OCI-LY7 (cell line): ENCODE measurements at regions of chr18 and their contacts with region 1.

Region 1: DNA sequence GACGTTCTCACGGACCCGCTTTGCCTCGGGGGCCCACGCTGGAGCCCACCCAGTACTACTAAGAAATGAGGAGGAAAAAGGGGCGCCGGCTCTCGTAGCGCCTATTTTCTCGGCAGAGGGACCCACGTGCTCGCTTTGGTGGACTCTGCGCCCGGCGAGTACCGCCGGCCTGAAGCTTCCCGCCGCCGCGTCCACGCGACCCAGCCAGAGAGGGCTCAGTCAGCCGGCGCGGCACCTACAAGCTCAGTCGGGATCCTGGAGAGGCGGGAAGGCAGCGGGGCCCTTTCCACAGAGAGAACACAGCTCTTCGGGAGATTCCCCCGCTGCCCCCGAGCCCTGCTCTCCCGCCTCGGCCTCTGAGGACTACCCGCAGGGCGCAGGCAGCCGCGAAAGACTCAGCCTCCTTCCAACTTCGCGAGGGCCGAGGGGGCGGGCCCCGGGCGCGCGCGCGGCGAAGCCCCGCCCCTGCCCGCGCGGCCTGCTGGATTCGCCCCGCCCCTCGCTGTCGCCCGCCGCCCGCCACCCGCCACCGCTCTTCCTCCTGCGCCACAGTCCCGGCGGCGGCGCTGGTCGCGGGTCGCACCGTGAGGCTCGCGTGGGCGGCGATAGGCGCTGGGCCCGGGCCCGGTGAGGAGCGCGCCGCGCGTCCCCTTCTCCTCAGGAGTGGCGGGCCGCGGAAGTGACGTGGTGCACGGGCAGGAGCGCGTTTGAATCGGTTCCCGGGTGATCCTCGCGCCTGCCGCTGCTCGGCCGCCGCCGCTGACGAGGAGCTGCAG is at the start of gene SMCHD1:
- DNase-seq: peak; percentile 87
- H3K4me3 ChIP-seq: peak within 1 kb of the TSS; percentile 97
- H3K27ac ChIP-seq: peak within 1 kb of the TSS; percentile 88
- H3K4me1 ChIP-seq: peaks cover 35% of the 10 kb centered on the region
- CTCF ChIP-seq: no peak
- total RNA-seq, gene SMCHD1: 140 and 164 TPM in 2 replicates

Region 2: GRCh38 chr18:2392446-2392845 is 262.9 kb before region 1 on chr18:
- CTCF ChIA-PET with region 1: no interaction called
- POLR2A ChIA-PET with region 1: no interaction called
- intact Hi-C with region 1: no loop called
- DNase-seq: no peak
- H3K4me3 ChIP-seq: no peak overlapping the region
- H3K27ac ChIP-seq: no peak overlapping the region
- H3K4me1 ChIP-seq: no peaks in the 10 kb centered on the region
- CTCF ChIP-seq: no peak

Region 3: DNA sequence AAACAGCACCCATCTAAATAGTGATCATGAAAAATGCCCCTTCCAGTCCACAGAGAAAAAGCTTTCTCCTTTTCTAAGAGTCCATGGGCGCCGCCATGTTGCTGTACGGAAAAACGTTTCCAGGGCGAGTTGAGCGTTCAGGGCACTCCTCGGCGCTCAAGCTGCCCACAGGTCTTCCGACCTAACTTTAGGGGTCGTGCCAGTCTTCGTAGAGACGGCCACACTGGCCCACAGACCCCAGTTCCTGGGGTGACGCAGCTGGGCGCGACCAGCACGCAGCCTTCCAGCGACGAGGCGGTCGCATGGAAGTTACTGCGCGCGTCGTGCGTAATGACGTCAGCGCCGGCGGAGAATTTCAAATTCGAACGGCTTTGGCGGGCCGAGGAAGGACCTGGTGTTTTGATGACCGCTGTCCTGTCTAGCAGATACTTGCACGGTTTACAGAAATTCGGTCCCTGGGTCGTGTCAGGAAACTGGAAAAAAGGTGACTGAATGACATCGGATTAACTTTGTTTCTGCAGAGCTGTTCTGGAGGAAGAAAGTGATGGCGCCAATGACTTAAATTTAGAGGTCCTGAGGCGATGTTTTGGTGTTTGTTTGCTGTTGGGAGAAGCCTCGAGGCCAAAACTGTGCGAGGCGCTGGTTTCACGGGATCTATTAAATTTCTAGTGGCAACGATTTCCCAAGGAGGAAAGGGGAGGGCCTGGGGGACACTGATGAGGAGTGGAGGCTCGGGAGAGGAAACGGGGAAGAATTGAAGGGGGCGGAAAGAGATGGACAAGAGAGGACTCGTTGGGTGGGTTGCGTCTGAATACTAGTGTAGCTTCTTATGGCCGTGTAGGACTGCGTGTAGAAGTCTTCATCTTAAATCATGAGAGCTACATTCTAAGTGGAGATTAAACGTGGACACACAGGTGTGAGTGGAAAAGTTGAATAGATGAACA is 83.9 kb before region 1 on chr18 and contains the starts of genes METTL4 and NDC80:
- CTCF ChIA-PET with region 1: interaction called, 4 read pairs
- POLR2A ChIA-PET with region 1: interaction called, 9 read pairs
- intact Hi-C with region 1: loop called (anchors 1 kb)
- DNase-seq: peak; percentile 94
- H3K4me3 ChIP-seq: peak within 1 kb of the TSS; percentile 84
- H3K27ac ChIP-seq: peak within 1 kb of the TSS; percentile 78
- H3K4me1 ChIP-seq: peaks cover 19% of the 10 kb centered on the region
- CTCF ChIP-seq: no peak
- total RNA-seq, gene METTL4: 11.8 and 12.4 TPM in 2 replicates
- total RNA-seq, gene NDC80: 73.0 and 91.1 TPM in 2 replicates

Region 4: GRCh38 chr18:2636126-2636631 is 19.2 kb before region 1 on chr18:
- CTCF ChIA-PET with region 1: interaction called, 4 read pairs
- POLR2A ChIA-PET with region 1: interaction called, 29 read pairs
- intact Hi-C with region 1: loop called (anchors 1 kb)
- DNase-seq: no peak
- H3K4me3 ChIP-seq: peak overlapping the region; percentile 53
- H3K27ac ChIP-seq: peak overlapping the region; percentile 91
- H3K4me1 ChIP-seq: peaks cover 55% of the 10 kb centered on the region
- CTCF ChIP-seq: no peak

Region 5: DNA sequence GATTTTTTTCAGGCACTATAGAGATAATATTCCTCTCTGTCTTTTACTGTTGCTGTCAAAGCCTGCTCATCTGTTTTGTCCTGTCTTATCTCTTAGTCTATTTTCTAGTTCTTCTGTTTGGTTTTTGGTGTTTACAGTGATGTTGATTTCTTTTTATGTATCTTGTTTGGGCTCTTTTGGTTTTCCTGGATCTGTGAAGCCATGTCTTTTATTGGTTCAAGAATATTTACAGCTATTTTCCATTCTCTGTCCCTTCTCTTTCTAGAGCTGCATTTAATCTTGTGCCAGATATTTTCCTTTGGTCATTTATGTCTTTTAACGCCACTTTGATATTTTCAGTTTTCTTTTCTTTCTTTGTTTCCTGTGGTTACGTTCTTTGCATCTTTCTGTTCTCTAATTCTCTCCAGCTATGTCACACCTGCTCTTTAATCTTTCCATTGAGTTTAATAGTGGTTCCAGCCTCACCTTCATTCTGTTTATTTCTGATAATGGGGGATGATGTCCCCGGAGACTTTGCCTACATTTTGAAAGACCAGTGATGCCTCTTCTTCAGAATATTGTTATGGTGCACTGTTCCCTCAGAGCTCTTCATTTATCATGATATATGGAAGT is 32.1 kb after region 1 on chr18:
- CTCF ChIA-PET with region 1: no interaction called
- POLR2A ChIA-PET with region 1: interaction called, 18 read pairs
- intact Hi-C with region 1: loop called (anchors 2 kb)
- DNase-seq: peak; percentile 76
- H3K4me3 ChIP-seq: peak overlapping the region; percentile 37
- H3K27ac ChIP-seq: peak overlapping the region; percentile 79
- H3K4me1 ChIP-seq: peaks cover 25% of the 10 kb centered on the region
- CTCF ChIP-seq: no peak

Region 6: DNA sequence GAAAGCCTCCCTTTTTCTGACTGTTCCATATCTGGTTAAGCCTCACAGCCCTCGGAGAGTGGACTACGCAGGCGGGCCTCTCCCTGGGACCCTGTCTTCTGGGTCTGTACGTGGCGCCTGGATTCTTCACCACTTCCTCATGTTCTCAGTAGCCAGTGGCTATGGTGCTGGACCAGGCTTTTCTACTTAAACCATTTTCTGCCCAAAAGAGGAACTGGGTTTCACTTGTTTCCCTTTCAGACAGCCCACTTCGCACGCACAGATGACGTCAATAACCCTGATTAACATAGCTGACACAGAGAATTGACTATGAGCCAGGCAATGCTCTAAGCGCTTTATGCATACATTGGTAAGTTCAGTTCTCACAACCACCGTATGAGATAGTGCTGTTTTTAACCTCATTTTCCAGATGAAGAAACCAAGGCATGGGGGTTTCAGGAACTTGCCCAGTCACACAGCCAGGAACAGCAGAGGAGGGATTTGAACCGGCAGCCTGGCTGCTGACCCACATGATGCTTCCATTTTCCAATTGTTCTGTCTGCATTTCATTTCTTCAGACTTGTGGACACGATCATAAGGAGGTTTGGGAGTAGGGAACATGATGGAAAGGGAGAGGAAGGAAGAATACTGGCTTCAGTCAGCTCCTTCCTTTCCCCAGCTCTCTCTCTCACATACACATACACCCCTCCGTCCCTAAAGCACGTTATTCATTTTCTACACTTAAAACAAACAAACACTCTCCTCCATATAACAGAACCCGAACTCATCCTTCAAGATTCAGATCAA is 522.7 kb after region 1 on chr18:
- CTCF ChIA-PET with region 1: no interaction called
- POLR2A ChIA-PET with region 1: no interaction called
- intact Hi-C with region 1: loop called (anchors 10 kb)
- DNase-seq: peak; percentile 90
- H3K4me3 ChIP-seq: peak overlapping the region; percentile 20
- H3K27ac ChIP-seq: peak overlapping the region; percentile 91
- H3K4me1 ChIP-seq: peaks cover 53% of the 10 kb centered on the region
- CTCF ChIP-seq: no peak

Region 7: DNA sequence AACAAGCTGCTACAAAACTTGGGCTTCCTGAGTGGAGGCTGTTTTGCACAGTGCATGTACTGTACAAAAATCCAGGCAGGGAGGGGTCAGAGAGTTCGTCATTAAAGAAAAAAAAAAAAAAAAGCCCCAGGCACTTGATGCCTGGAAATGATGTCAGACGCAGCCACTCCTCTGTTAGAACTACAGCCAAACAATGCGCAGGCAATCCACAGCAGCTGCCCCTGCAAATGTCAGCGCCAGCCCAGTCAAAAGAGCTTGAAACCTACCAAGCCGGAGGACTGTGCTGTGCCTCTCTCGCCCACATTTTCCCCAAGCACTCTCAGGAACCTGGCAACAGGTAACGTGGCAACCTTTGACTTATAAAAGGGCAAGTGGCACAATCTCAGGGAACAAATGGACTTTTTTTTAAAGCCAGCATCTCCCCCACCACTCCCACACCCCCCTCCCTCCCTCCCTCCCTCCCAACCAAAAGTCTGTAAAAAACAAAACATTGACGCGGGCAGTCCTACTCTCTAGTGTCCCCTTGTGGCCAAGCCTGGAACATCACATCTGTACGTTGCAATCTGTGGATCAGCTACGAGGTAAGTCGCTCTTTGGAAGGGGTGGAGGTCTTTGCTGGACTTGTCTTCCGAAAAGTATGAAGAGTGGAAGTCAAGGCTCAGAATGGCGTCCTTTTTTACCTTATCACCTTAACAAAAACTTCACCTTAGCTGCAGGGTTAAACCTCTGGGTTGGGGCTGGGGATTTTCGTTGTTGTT is 938.7 kb after region 1 on chr18:
- CTCF ChIA-PET with region 1: no interaction called
- POLR2A ChIA-PET with region 1: no interaction called
- intact Hi-C with region 1: loop called (anchors 10 kb)
- DNase-seq: peak; percentile 97
- H3K4me3 ChIP-seq: peak overlapping the region; percentile 79
- H3K27ac ChIP-seq: peak overlapping the region; percentile 95
- H3K4me1 ChIP-seq: peaks cover 80% of the 10 kb centered on the region
- CTCF ChIP-seq: peak; percentile 79